A549 (cell line): ENCODE measurements at regions of chr10 and their contacts with region 1.

Region 1: DNA sequence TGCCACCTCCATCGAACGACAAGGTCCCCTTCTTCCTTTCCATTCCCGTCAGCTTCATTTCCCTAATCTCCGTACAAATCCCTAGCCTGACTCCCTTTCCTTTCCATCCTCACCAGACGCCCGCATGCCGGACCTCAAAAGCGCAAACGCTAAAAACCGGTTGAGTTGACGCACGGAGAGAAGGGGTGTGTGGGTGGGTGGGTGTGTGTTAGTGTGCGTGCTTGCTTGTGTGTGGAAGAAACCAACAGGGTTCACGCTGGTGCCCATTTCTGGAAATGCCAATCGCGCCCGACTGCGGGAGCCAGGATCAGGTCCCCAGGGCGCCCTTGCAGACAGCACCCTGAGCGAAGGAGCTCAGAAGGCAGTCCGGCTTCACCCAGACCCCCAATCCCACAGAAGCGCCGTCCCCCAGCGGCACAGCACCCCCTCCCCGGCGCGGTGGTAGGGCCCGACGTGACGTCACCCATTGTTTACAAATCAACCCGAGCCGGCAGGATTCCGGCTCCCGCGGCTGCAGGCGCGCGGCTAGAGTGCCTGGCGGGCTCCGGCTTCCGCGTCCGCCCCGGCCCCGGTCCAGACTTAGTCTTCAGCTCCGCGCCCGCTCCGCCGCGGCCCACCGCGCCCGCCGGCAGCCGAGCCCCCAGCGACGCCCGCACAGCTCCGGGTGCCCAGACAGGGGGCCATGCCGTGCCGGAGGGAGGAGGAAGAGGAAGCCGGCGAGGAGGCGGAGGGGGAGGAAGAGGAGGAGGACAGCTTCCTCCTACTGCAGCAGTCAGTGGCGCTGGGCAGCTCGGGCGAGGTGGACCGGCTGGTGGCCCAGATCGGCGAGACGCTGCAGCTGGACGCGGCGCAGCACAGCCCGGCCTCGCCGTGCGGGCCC is at the start of gene FRAT1:
- DNase-seq: peak; percentile 82 to 91
- ATAC-seq: peak; percentile 86 to 88
- H3K4me3 ChIP-seq: peak within 1 kb of the TSS; percentile 58
- H3K27ac ChIP-seq: peak within 1 kb of the TSS; percentile 95 to 99
- H3K4me1 ChIP-seq: 0 out of 3 replicates have a peak, but pooled peaks cover 3% of the 10 kb centered on the region
- CTCF ChIP-seq: no peak
- EP300 ChIP-seq: no peak
- POLR2A ChIP-seq: peak; percentile 36
- RAD21 ChIP-seq: no peak
- polyA plus RNA-seq, gene FRAT1: 1.3 and 1.5 TPM in 2 replicates

Region 2: DNA sequence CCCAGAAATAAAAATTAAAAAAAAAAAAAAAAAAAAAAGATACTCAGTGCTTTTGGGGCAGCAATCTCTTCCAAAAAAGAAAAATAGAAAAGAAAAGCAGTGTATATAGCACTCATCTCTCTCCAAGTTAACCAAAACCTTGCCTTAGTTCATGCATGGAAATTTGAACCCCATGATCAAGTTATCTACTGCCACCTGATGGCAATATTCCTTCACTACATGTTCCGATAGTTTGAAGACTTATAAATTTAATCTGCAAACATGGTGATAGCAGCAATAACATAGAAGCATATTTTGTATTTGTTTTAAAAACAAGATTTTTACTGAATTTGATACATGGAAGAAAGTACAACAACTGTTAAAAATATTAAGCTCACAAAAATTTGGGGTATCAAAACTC is 84.6 kb before region 1 on chr10:
- CTCF ChIA-PET with region 1: no interaction called
- POLR2A ChIA-PET with region 1: no interaction called
- DNase-seq: peak; percentile 13 to 51
- ATAC-seq: peak; percentile 54 to 58; a peak in 3 of 6 replicates
- H3K4me3 ChIP-seq: no peak overlapping the region
- H3K27ac ChIP-seq: no peak overlapping the region
- H3K4me1 ChIP-seq: peaks cover 12% of the 10 kb centered on the region
- CTCF ChIP-seq: peak; percentile 70
- EP300 ChIP-seq: no peak
- POLR2A ChIP-seq: no peak
- RAD21 ChIP-seq: peak; percentile 71

Region 3: DNA sequence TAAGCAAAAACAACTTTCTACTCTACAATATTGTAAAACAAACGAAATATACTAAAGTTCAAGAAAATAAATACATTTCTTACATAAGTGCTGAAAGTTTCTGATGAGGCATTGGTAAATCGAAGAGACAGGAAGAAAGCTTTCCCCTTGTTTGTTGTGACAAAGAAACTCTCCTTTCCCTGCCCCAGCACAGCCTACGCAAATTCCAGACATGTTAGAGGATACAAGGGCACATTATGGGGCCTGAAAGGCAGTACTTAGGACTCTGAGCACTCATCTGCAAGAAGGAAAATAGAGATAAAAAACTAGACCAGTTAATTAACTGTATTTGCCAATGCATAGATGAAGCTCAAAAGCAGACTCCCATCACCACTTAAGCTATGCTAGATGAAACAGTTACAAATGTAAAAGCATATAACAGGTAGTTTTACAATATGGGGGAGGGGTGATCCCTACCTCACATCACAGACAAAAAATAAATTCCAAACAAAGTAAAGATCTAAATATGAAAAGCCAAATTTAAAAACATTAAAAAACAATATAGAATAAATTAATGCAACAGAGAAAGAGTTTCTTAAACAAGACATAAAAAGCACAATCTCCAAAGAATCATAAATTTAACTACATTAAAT is 48.4 kb before region 1 on chr10:
- CTCF ChIA-PET with region 1: no interaction called
- POLR2A ChIA-PET with region 1: interaction called, 10 read pairs
- DNase-seq: no peak
- ATAC-seq: no peak
- H3K4me3 ChIP-seq: no peak overlapping the region
- H3K27ac ChIP-seq: no peak overlapping the region
- H3K4me1 ChIP-seq: no peaks in the 10 kb centered on the region
- CTCF ChIP-seq: no peak
- EP300 ChIP-seq: no peak
- POLR2A ChIP-seq: no peak
- RAD21 ChIP-seq: no peak

Region 4: DNA sequence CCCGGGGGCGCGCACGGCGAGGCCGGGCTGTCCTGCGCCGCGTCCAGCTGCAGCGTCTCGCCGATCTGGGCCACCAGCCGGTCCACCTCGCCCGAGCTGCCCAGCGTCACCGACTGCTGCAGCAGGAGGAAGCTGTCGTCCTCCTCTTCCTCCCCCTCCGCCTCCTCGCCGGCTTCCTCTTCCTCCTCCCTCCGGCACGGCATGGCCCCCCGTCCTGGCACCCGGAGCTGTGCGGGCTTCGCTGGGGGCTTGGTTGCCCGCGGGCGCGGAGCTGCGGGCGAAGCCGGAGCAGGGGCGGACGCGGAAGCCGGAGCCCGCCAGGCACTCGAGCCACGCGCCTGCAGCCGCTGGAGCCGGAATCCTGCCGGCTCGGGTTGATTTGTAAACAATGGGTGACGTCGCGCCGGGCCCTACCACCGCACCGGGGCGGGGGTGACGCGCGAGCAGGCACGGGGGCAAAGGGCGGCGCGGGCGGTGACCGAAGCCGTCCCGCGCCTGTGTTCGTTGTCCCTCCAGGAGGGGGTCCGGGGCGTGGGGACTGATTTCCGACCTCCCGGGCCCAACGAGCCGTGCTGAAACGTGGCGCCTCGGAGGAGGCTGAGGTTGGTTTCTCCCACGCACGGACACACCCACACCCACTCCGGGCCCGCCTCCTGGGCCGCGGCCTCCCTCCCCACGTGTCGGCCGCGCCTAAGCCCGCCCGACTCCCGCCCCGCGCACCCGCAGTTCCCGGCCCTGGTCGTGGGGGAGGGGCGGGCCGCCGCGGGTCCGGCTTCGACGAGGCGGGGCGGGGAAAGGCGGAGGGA is 15.6 kb after region 1 on chr10 and contains the start of gene FRAT2:
- CTCF ChIA-PET with region 1: interaction called, 10 read pairs
- POLR2A ChIA-PET with region 1: no interaction called
- DNase-seq: peak; percentile 91 to 96
- ATAC-seq: peak; percentile 86 to 89
- H3K4me3 ChIP-seq: peak within 1 kb of the TSS; percentile 87
- H3K27ac ChIP-seq: peak within 1 kb of the TSS; percentile 95 to 97
- H3K4me1 ChIP-seq: peaks cover 31% of the 10 kb centered on the region
- CTCF ChIP-seq: no peak
- EP300 ChIP-seq: no peak
- POLR2A ChIP-seq: peak; percentile 32; the same call in 1 of the 2 replicates
- RAD21 ChIP-seq: no peak
- polyA plus RNA-seq, gene FRAT2: 4.1 and 4.4 TPM in 2 replicates